Heart right ventricle (tissue), 16 donors: ENCODE measurements at regions of chr2 and their contacts with region 1.

Region 1: GRCh38 chr2:163735685-163736432 is at the start of gene FIGN:
- DNase-seq: peak; percentile 77
- ATAC-seq: peak; percentile 83 to 95 (median 87)
- H3K4me3 ChIP-seq: peak within 1 kb of the TSS; percentile 46 to 74 (median 72)
- H3K27ac ChIP-seq: peak within 1 kb of the TSS; percentile 81 to 96 (median 94)
- H3K4me1 ChIP-seq: peaks cover 0 to 10% (median 0%) of the 10 kb centered on the region in 9 donors
- H3K27me3 ChIP-seq: peaks cover 0 to 30% (median 0%) of the 10 kb centered on the region in 7 donors
- CTCF ChIP-seq: no peak
- total RNA-seq, gene FIGN: 10.0 to 17.0 (median 12.2) TPM

Region 2: GRCh38 chr2:163044114-163044513 is 691.7 kb before region 1 on chr2:
- intact Hi-C with region 1: no loop called
- DNase-seq: no peak
- ATAC-seq: no peak
- H3K4me3 ChIP-seq: no peak overlapping the region
- H3K27ac ChIP-seq: no peak overlapping the region
- H3K4me1 ChIP-seq: no peaks in the 10 kb centered on the region
- H3K27me3 ChIP-seq: no peaks in the 10 kb centered on the region
- CTCF ChIP-seq: no peak

Region 3: GRCh38 chr2:163465440-163465839 is 270.4 kb before region 1 on chr2:
- intact Hi-C with region 1: loop called in 6 of 10 experiments (anchors 5 to 10 kb)
- DNase-seq: no peak
- ATAC-seq: peak; percentile 44 to 79 (median 63)
- H3K4me3 ChIP-seq: no peak overlapping the region
- H3K27ac ChIP-seq: no peak overlapping the region
- H3K4me1 ChIP-seq: peaks cover 0 to 29% (median 3%) of the 10 kb centered on the region in 9 donors
- H3K27me3 ChIP-seq: no peaks in the 10 kb centered on the region
- CTCF ChIP-seq: no peak

Region 4: DNA sequence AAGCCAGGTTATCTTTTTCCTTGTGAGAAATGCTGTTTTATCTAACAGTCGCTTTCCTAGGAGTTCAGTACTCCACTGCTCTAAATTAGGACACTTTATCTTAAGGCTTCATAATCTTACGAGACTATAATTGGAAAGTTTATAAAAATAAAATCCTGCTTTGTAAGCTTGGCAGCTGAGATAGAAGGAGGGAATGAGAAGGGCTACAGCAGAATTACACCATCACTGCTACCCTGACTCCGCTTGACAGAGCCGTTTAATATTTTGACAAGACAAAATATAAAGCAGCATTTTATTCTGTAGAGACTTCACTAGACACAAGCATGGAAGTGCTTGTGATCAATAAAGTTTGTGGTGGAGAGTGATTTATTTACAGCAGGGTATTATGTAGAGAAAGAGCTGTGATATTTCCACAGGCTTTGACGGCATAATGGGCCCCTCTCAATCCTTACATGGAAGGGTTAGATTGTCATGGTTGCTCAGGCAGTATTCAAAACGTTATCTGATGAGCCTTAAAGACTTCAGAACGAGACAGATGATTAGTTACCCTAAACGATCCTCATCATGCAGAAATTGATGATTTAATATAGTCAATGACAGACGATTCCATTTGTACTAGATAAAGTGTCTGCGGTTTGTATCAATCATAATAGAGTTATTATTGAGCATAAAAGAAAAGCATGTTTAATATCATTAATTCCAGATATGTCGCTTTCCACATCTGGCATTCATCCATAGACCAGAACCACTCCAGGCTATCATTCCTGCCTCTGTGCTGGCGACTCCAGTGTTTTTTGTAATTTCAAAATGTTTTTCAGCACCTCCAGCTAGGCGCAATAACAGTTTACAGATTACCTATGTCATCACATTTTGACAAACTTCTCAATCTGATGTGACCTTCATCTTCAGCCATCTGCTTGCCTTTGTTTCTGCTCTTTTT is 242.2 kb before region 1 on chr2:
- intact Hi-C with region 1: loop called in 2 of 10 experiments (anchors 5 to 10 kb)
- DNase-seq: no peak
- ATAC-seq: peak; percentile 23 to 86 (median 54)
- H3K4me3 ChIP-seq: peak overlapping the region in 2 of 10 donors; percentile 8 to 9
- H3K27ac ChIP-seq: peak overlapping the region in 7 of 10 donors; percentile 1 to 44 (median 33)
- H3K4me1 ChIP-seq: peaks cover 0 to 15% (median 0%) of the 10 kb centered on the region in 9 donors
- H3K27me3 ChIP-seq: no peaks in the 10 kb centered on the region
- CTCF ChIP-seq: no peak

Region 5: DNA sequence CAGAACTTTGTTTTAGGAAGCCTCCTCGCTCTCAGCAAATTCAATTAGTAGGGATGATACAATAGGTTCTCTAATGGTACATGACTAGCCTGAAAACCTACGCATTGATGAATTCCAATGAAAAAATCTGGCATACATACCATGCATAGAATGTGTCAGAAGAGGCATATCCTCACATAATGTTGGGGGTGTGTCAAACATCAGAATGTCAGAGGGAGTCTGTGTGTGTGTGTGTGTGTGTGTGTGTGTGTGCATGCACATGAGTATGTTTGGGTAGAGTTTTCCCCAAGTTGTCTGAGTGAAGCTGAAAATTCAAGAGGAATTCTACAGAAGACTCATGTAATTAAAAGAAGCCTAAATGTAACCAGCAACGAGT is 78.6 kb before region 1 on chr2:
- intact Hi-C with region 1: loop called in 2 of 10 experiments (anchors 5 to 10 kb)
- DNase-seq: no peak
- ATAC-seq: no peak
- H3K4me3 ChIP-seq: no peak overlapping the region
- H3K27ac ChIP-seq: peak overlapping the region in 7 of 10 donors; percentile 5 to 76 (median 71)
- H3K4me1 ChIP-seq: peaks cover 0 to 46% (median 12%) of the 10 kb centered on the region in 9 donors
- H3K27me3 ChIP-seq: no peaks in the 10 kb centered on the region
- CTCF ChIP-seq: no peak

Region 6: DNA sequence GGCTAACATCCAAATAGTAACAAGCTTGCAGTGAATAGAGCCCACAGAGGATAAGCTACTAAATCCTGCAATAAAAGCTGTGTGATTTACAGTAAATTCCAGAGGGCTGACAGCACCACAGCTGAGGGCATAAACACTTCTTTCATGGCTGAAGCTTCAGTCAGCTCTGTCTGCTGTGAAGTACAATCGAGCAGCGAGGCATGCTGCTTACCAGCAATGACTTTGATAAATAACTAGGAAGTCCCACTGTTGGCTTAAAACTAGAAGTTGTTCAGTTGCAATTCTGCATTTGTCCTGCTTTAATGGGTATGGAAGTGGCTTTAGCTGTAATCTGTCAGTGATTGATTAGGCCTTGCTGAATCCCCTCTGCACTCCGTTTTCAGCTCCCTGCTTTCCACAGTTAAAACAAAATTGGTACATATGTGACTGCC is 65.1 kb after region 1 on chr2:
- intact Hi-C with region 1: loop called in 1 of 10 experiments (anchors 5 kb)
- DNase-seq: no peak
- ATAC-seq: peak in 4 of 8 donors; percentile 28 to 49 (median 40)
- H3K4me3 ChIP-seq: no peak overlapping the region
- H3K27ac ChIP-seq: peak overlapping the region in 5 of 10 donors; percentile 15 to 41 (median 34)
- H3K4me1 ChIP-seq: peaks cover 0 to 33% (median 0%) of the 10 kb centered on the region in 9 donors
- H3K27me3 ChIP-seq: no peaks in the 10 kb centered on the region
- CTCF ChIP-seq: no peak

Region 7: DNA sequence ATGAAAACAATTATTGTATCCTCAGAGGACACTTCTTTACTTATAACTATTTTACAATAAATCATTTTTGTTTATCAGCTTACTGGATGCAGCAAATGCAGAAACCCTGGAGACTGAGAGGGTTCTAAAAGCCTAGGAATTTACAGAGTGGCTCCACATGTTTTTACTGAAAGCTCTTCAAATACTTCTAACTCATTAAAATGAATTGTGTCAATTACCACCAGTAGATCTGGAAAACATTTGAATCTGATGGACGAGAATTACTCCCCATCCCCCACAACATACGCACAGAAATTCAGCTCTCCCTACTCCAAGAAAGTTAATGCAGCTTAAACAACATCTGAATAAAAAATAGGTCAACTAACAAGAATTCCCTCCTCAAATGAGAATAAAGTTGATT is 319.8 kb after region 1 on chr2:
- intact Hi-C with region 1: loop called in 6 of 10 experiments (anchors 5 to 10 kb)
- DNase-seq: no peak
- ATAC-seq: no peak
- H3K4me3 ChIP-seq: no peak overlapping the region
- H3K27ac ChIP-seq: no peak overlapping the region
- H3K4me1 ChIP-seq: peaks cover 0 to 11% (median 3%) of the 10 kb centered on the region in 9 donors
- H3K27me3 ChIP-seq: no peaks in the 10 kb centered on the region
- CTCF ChIP-seq: no peak